ENCODE measurements at regions of chr13 and their contacts with region 1.

Region 1: DNA sequence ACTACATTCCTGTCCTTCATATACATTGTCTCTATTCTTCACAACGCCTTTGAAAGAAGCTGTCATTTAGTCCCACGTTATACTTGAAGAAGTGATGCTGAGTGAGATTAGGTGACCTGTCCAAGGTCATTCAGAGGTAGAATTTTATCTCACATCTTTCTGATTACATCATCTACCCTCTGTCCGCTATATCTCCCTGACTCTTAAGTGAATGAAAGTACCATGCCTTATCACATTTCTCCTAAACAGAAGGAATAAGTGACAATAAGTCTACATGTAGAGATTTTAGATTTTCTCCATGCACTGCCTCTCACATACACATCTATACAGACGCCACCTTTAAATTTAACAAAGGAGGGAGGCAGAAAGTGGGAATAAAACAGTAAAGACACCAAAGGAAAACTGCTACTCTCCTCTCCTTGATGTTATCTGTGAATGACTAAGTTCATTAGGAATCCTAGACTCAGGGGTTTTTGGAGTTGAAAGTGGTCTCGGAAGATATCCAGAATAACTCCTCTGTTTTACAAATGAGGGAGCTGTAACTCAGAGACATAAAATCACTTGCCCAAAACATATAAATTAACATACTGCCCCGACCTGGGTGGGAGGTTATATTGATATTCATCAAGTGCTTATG is 4.9 kb upstream of the CLDN10 start:
- H3K4me3 ChIP-seq: no peak overlapping the region
- H3K27ac ChIP-seq: no peak overlapping the region
- H3K4me1 ChIP-seq: peaks cover 4% of the 10 kb centered on the region; the same call in 1 of the 2 replicates
- CTCF ChIP-seq: no peak

Region 2: DNA sequence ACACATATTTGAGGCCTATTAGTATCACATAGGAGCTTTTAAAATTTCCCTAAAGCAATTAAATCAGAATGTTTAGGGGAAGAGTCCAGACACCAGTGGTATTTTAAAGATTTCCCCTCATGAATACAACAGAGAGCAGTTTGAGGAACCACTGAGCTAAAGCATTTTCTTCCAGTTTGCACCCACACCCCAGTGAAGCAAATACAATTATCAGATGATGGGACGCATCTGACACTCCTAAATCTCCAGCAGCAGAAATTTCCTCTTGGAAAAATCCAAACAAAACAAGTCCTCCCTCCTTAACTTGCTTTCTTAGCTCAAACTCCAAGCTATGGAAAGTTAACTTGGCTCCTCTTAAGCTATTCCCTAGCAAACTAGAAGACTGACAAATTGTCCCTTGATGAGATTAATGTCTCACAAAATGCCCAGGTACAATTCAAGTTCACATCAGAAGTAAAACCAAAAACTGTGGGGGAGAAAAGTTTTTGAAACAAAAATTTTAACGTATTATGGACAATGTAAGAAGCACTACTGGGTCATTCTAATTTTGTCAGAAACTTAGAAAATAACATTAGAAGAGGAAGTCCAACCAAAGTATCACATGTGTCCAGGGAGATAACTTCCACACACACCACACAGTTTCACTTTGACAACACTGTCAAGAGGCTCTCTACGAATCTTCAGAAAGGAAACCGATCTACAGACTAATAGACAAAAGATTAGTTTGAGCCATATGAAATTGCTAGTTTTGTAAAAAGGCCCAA is 320.5 kb before region 1 on chr13:
- CTCF ChIA-PET with region 1: no interaction called
- POLR2A ChIA-PET with region 1: no interaction called
- H3K4me3 ChIP-seq: no peak overlapping the region
- H3K27ac ChIP-seq: no peak overlapping the region
- H3K4me1 ChIP-seq: peaks cover 2% of the 10 kb centered on the region; the same call in 1 of the 2 replicates
- CTCF ChIP-seq: no peak

Region 3: DNA sequence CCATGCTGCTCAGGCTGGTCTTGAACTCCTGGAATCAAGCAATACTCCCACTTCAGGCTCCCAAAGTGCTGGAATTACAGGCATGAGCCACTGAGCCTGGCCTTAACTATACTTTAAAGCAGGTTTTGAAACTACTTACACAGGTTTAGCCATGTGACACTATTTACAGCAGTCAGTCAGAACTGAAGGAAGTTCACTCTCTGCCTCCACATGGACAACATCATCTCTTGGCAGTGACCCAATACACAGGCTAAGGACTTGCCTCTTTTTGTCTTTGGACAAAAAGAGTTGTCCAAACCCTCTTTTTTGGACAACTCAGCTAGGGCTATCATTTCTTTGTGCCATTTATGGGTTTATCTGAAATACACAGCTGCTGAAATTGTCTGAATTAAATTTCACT is 84.1 kb before region 1 on chr13:
- CTCF ChIA-PET with region 1: no interaction called
- POLR2A ChIA-PET with region 1: no interaction called
- H3K4me3 ChIP-seq: no peak overlapping the region
- H3K27ac ChIP-seq: no peak overlapping the region
- H3K4me1 ChIP-seq: no peaks in the 10 kb centered on the region
- CTCF ChIP-seq: no peak

Region 4: GRCh38 chr13:95536632-95537241 is 10.9 kb before region 1 on chr13:
- CTCF ChIA-PET with region 1: interaction called, 13 read pairs
- POLR2A ChIA-PET with region 1: no interaction called
- H3K4me3 ChIP-seq: no peak overlapping the region
- H3K27ac ChIP-seq: no peak overlapping the region
- H3K4me1 ChIP-seq: peaks cover 2% of the 10 kb centered on the region; the same call in 1 of the 2 replicates
- CTCF ChIP-seq: no peak

Region 5: GRCh38 chr13:95573226-95573625 is 25.6 kb after region 1 on chr13:
- CTCF ChIA-PET with region 1: no interaction called
- POLR2A ChIA-PET with region 1: no interaction called
- H3K4me3 ChIP-seq: no peak overlapping the region
- H3K27ac ChIP-seq: no peak overlapping the region
- H3K4me1 ChIP-seq: no peaks in the 10 kb centered on the region; the same call in 1 of the 2 replicates
- CTCF ChIP-seq: no peak

Measured in HEK293 (cell line).